Naive thymus-derived CD4-positive, alpha-beta T cell (primary cell): ENCODE measurements at regions of chr4 and their contacts with region 1.

Region 1: DNA sequence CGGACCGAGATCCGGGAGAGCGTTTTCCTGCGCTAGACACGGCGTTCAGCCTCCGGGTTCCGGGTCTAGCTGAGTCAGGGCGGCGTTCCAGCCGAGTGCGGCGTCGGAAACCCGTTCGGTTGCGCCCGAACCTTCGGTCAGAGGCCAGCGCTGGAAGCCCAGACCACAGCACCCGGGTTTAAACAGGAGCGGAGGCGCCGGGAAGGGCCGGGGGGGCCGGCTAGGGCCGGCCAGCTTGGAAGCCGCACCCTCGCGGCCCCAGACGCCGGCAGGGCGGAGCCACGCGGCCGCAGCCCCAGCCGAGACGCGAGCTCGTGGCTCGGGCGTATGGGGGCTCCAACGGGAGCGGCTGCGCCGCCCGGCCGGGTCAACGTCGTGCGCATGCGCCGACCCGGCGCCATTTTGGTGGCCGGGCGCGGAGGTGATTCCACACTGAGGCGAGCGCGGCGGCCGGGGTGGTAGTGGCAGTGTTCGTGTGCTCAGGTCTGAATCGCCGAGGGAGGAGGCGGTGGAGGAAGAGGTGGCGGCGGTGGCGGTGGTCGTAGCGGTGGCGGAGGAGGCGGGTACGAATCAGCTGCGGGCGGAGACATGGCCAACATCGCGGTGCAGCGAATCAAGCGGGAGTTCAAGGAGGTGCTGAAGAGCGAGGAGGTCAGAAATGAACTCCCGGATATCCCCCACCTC is at the start of gene UBE2K:
- DNase-seq: peak; percentile 82 to 97 (median 91)
- ATAC-seq: peak; percentile 93
- H3K4me3 ChIP-seq: peak within 1 kb of the TSS; percentile 94
- H3K4me3 Mint-ChIP-seq: peak within 1 kb of the TSS; percentile 95 to 100 (median 98)
- H3K27ac ChIP-seq: peak within 1 kb of the TSS; percentile 98
- H3K27ac Mint-ChIP-seq: peak within 1 kb of the TSS; percentile 96 to 99 (median 97)
- H3K4me1 ChIP-seq: peaks cover 17 to 22% of the 10 kb centered on the region in 2 donors
- H3K4me1 Mint-ChIP-seq: peaks cover 19 to 53% (median 37%) of the 10 kb centered on the region in 7 donors
- H3K27me3 ChIP-seq: no peaks in the 10 kb centered on the region
- H3K27me3 Mint-ChIP-seq: no peaks in the 10 kb centered on the region
- total RNA-seq, gene UBE2K: 31.1 to 85.0 (median 43.7) TPM

Region 2: DNA sequence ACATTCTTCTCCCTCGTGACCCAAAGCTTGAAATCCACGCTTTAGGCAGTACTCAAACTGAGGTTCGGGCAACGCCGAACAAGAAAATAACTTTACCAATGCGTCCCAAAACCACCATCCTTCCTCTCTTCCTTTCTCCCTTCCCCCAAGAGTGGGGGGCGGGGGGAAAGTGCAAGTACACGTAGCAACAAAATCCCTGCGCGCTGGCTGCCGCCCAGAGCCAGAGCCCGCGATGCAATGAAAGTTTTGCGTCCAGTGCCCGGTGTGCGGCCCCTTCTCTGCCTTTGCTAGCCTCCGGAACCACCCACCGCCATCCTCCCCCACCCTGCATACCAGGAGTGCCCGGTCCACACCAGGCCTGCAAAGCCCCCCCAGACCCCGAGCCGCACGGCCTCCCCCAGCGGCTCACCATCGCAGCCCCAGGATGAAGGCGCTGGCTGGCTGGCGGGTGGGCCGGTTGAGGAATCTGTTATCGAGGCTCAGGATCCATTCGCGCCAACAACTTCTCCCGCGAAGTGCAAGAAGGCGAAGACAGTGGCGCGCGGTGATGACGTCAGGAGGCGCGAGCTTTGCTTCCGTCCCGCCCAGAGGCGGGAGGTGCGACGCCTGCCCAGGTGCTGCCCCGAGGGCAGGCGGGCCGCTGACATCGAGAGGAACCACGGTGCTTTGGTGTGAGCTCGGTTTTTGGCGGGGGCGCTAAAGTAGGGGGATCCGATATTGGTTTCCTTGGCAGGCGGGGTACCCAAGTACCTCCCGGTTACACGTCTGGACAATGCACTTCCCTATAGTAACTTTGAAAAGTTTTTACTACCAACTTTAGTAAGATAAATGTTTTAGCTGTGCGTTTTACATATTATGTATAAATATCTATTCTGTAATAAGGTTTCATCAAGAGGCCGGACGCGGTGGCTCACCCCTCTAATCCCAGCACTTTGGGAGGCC is 331.8 kb before region 1 on chr4 and contains the start of gene RFC1:
- CTCF ChIA-PET with region 1: no interaction called
- POLR2A ChIA-PET with region 1: no interaction called
- intact Hi-C with region 1: loop called in 1 of 2 experiments (anchors 5 kb)
- DNase-seq: peak; percentile 84 to 92 (median 91)
- ATAC-seq: peak; percentile 98
- H3K4me3 ChIP-seq: peak within 1 kb of the TSS; percentile 69
- H3K4me3 Mint-ChIP-seq: peak within 1 kb of the TSS; percentile 88 to 98 (median 94)
- H3K27ac ChIP-seq: peak within 1 kb of the TSS; percentile 84
- H3K27ac Mint-ChIP-seq: peak within 1 kb of the TSS; percentile 72 to 97 (median 92)
- H3K4me1 ChIP-seq: peaks cover 12 to 19% of the 10 kb centered on the region in 2 donors
- H3K4me1 Mint-ChIP-seq: peaks cover 33 to 59% (median 41%) of the 10 kb centered on the region in 7 donors
- H3K27me3 ChIP-seq: no peaks in the 10 kb centered on the region
- H3K27me3 Mint-ChIP-seq: no peaks in the 10 kb centered on the region
- total RNA-seq, gene RFC1: 62.4 to 66.4 (median 64.3) TPM

Region 3: DNA sequence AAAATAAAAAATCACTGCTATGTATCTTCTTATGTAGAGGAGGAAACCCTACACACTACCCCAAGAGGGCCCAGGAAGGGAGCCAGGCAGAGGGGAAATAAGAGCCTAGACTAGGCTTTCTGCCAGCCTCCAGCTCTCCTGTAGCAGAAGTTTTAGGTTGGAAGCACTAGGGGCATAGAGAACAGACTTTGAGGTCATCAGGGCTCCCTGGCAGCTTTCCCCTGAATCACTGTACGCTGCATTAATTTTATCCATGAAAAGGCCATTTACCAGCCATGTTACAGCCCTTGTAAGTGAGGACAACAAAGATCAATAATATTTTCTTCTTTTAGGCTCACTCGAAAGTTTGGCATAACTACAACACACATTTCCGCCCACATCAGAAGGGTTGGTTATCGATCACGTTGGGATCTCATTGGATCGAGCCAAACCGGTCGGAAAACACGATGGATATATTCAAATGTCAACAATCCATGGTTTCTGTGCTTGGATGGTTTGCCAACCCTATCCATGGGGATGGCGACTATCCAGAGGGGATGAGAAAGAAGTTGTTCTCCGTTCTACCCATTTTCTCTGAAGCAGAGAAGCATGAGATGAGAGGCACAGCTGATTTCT is 263.9 kb before region 1 on chr4:
- CTCF ChIA-PET with region 1: no interaction called
- POLR2A ChIA-PET with region 1: no interaction called
- intact Hi-C with region 1: no loop called
- DNase-seq: no peak
- ATAC-seq: no peak
- H3K4me3 ChIP-seq: no peak overlapping the region
- H3K4me3 Mint-ChIP-seq: no peak overlapping the region
- H3K27ac ChIP-seq: no peak overlapping the region
- H3K27ac Mint-ChIP-seq: no peak overlapping the region
- H3K4me1 ChIP-seq: no peaks in the 10 kb centered on the region
- H3K4me1 Mint-ChIP-seq: no peaks in the 10 kb centered on the region
- H3K27me3 ChIP-seq: no peaks in the 10 kb centered on the region
- H3K27me3 Mint-ChIP-seq: peaks cover 0 to 12% (median 0%) of the 10 kb centered on the region in 5 donors

Region 4: GRCh38 chr4:39469429-39470077 is 228.3 kb before region 1 on chr4:
- CTCF ChIA-PET with region 1: no interaction called
- POLR2A ChIA-PET with region 1: no interaction called
- intact Hi-C with region 1: loop called (anchors 1 kb)
- DNase-seq: peak in 7 of 9 donors; percentile 36 to 60 (median 47)
- ATAC-seq: peak; percentile 98
- H3K4me3 ChIP-seq: no peak overlapping the region
- H3K4me3 Mint-ChIP-seq: no peak overlapping the region
- H3K27ac ChIP-seq: no peak overlapping the region
- H3K27ac Mint-ChIP-seq: peak overlapping the region in 6 of 9 donors; percentile 24 to 62 (median 44)
- H3K4me1 ChIP-seq: no peaks in the 10 kb centered on the region
- H3K4me1 Mint-ChIP-seq: peaks cover 0 to 15% (median 4%) of the 10 kb centered on the region in 7 donors
- H3K27me3 ChIP-seq: no peaks in the 10 kb centered on the region
- H3K27me3 Mint-ChIP-seq: no peaks in the 10 kb centered on the region

Region 5: GRCh38 chr4:39638354-39639240 is 59.3 kb before region 1 on chr4 and contains the start of gene SMIM14:
- CTCF ChIA-PET with region 1: no interaction called
- POLR2A ChIA-PET with region 1: interaction called, 6 read pairs
- intact Hi-C with region 1: loop called (anchors 1 to 2 kb)
- DNase-seq: peak; percentile 69 to 96 (median 82)
- ATAC-seq: peak; percentile 92
- H3K4me3 ChIP-seq: peak within 1 kb of the TSS; percentile 77
- H3K4me3 Mint-ChIP-seq: peak within 1 kb of the TSS; percentile 86 to 97 (median 94)
- H3K27ac ChIP-seq: peak within 1 kb of the TSS; percentile 79
- H3K27ac Mint-ChIP-seq: peak within 1 kb of the TSS; percentile 67 to 96 (median 86)
- H3K4me1 ChIP-seq: peaks cover 12 to 13% of the 10 kb centered on the region in 2 donors
- H3K4me1 Mint-ChIP-seq: peaks cover 22 to 51% (median 44%) of the 10 kb centered on the region in 7 donors
- H3K27me3 ChIP-seq: no peaks in the 10 kb centered on the region
- H3K27me3 Mint-ChIP-seq: peaks cover 0 to 27% (median 0%) of the 10 kb centered on the region in 5 donors
- total RNA-seq, gene SMIM14: 4.6 to 15.1 (median 12.9) TPM

Region 6: DNA sequence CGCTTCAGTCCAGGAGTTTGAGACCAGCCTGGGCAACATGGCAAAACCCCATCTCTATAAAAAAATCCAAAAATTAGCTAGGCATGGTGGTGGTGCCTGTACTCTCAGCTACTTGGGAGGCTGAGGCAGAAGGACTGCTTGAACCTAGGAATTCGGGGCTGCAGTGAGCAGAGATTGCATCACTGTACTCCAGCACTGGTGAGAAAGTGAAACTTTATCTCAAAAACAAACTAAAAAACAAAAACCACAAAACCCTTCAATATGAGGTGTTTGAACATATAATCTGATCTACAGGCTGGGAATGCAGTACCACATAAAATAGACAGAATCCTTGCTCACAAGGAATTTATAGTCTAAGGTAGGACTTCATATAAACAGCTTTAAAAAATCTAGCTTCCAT is 175.9 kb after region 1 on chr4:
- CTCF ChIA-PET with region 1: no interaction called
- POLR2A ChIA-PET with region 1: no interaction called
- intact Hi-C with region 1: loop called in 1 of 2 experiments (anchors 10 kb)
- DNase-seq: no peak
- ATAC-seq: no peak
- H3K4me3 ChIP-seq: no peak overlapping the region
- H3K4me3 Mint-ChIP-seq: peak overlapping the region in 3 of 10 donors; percentile 2 to 46 (median 14)
- H3K27ac ChIP-seq: no peak overlapping the region
- H3K27ac Mint-ChIP-seq: peak overlapping the region in 8 of 9 donors; percentile 49 to 74 (median 64)
- H3K4me1 ChIP-seq: no peaks in the 10 kb centered on the region
- H3K4me1 Mint-ChIP-seq: peaks cover 9 to 31% (median 20%) of the 10 kb centered on the region in 7 donors
- H3K27me3 ChIP-seq: no peaks in the 10 kb centered on the region
- H3K27me3 Mint-ChIP-seq: no peaks in the 10 kb centered on the region

Region 7: DNA sequence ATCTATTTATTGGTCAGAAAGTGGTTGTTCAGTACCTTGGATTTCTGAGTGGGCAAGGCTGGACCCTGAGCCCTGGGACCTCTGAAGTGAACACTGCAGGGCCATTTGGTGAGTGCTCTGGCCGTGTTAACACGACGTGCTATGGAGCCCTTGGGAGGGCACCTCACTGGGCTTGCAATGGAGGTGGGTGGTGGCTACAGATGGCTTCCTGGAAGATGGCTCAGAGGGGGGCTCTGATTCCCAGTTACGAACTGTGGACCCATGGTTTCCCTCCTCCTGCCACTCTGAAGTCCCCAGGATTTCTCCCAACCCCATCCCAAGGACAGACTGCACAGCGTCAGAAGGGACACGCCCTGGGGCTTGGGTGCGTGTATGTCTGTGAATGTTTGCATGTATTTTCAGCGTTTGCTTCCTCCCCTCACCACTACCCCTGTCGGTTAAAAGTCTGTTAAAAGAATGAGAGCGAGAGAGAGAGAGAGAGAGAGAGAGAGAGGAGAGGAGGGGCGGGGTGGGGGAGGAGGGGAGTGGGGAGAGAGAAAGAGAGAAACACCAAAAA is 495.2 kb after region 1 on chr4:
- CTCF ChIA-PET with region 1: no interaction called
- POLR2A ChIA-PET with region 1: interaction called, 4 read pairs
- intact Hi-C with region 1: loop called in 1 of 2 experiments (anchors 5 kb)
- DNase-seq: peak in 8 of 9 donors; percentile 41 to 80 (median 74)
- ATAC-seq: peak; percentile 44
- H3K4me3 ChIP-seq: peak overlapping the region; percentile 61
- H3K4me3 Mint-ChIP-seq: peak overlapping the region; percentile 96 to 100 (median 99)
- H3K27ac ChIP-seq: peak overlapping the region; percentile 100
- H3K27ac Mint-ChIP-seq: peak overlapping the region; percentile 93 to 100 (median 99)
- H3K4me1 ChIP-seq: peaks cover 23 to 47% of the 10 kb centered on the region in 2 donors
- H3K4me1 Mint-ChIP-seq: peaks cover 47 to 80% (median 65%) of the 10 kb centered on the region in 7 donors
- H3K27me3 ChIP-seq: no peaks in the 10 kb centered on the region
- H3K27me3 Mint-ChIP-seq: peaks cover 0 to 4% (median 0%) of the 10 kb centered on the region in 5 donors

Region 8: GRCh38 chr4:40325189-40326019 is 627.5 kb after region 1 on chr4:
- CTCF ChIA-PET with region 1: no interaction called
- POLR2A ChIA-PET with region 1: interaction called, 3 read pairs
- intact Hi-C with region 1: loop called in 1 of 2 experiments (anchors 2 kb)
- DNase-seq: peak in 7 of 9 donors; percentile 70 to 85 (median 82)
- ATAC-seq: peak; percentile 100
- H3K4me3 ChIP-seq: no peak overlapping the region
- H3K4me3 Mint-ChIP-seq: peak overlapping the region in 4 of 10 donors; percentile 0 to 48 (median 14)
- H3K27ac ChIP-seq: peak overlapping the region; percentile 45
- H3K27ac Mint-ChIP-seq: peak overlapping the region in 8 of 9 donors; percentile 25 to 87 (median 64)
- H3K4me1 ChIP-seq: peaks cover 0 to 8% of the 10 kb centered on the region in 2 donors
- H3K4me1 Mint-ChIP-seq: peaks cover 13 to 40% (median 35%) of the 10 kb centered on the region in 7 donors
- H3K27me3 ChIP-seq: no peaks in the 10 kb centered on the region
- H3K27me3 Mint-ChIP-seq: peaks cover 0 to 7% (median 4%) of the 10 kb centered on the region in 5 donors